B cell (primary cell): ENCODE measurements at regions of chr3 and their contacts with region 1.

Region 1: GRCh38 chr3:194671900-194672808 is at the start of gene LSG1:
- DNase-seq: peak; percentile 97
- ATAC-seq: peak; percentile 96
- H3K4me3 ChIP-seq: peak within 1 kb of the TSS; percentile 67 to 99 (median 85)
- H3K4me3 Mint-ChIP-seq: peak within 1 kb of the TSS; percentile 99
- H3K27ac ChIP-seq: peak within 1 kb of the TSS; percentile 92 to 96
- H3K27ac Mint-ChIP-seq: peak within 1 kb of the TSS; percentile 99
- H3K4me1 ChIP-seq: peaks cover 13 to 15% of the 10 kb centered on the region in 2 donors
- H3K4me1 Mint-ChIP-seq: peaks cover 25% of the 10 kb centered on the region
- H3K27me3 ChIP-seq: no peaks in the 10 kb centered on the region
- H3K27me3 Mint-ChIP-seq: peaks cover 7% of the 10 kb centered on the region
- CTCF ChIP-seq: no peak
- total RNA-seq, gene LSG1: 49.8 and 54.6 TPM in 2 replicates

Region 2: DNA sequence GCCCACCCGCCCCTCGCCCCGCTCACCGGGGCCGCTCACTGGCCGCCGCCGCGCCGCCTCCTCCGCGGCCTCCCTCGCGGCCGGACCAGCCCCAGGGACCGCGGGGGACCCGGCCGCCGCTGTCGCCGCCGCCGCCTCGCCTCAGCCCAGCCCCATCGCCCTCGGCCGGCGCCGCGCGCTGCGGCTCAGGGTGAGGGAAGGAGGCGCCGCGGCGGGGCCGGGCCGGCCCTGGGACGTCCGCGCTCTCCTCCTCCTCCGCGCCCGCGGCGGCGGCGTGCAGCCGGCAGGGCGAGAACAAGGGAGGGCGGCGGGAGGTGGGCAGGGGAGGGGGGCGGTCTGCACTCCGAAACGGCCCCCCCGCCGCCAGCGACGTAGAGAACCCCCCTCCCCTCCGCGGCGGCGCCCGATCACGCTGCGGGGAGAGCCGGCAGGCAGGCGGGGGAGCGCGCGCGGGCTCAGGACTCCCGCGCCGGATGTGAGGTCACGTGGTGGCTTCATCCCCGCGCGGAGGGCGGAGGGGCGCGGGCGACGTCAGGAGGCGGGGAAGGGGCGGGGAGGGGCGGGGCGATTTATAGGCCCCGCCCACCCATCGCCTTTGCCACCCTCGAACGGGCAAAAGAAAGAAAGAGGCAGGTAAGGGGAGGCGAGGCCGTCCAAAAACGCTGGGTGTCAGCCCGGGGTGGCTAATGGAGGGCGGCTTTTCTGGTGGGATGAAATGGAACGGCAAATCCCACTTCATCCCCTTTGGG is 185.4 kb before region 1 on chr3 and contains the start of gene ATP13A3:
- CTCF ChIA-PET with region 1: no interaction called
- POLR2A ChIA-PET with region 1: no interaction called
- intact Hi-C with region 1: loop called (anchors 5 kb)
- DNase-seq: peak; percentile 95
- ATAC-seq: peak; percentile 81
- H3K4me3 ChIP-seq: peak within 1 kb of the TSS; percentile 63 to 92 (median 77)
- H3K4me3 Mint-ChIP-seq: peak within 1 kb of the TSS; percentile 93
- H3K27ac ChIP-seq: peak within 1 kb of the TSS; percentile 66 to 71
- H3K27ac Mint-ChIP-seq: peak within 1 kb of the TSS; percentile 92
- H3K4me1 ChIP-seq: peaks cover 32 to 50% of the 10 kb centered on the region in 2 donors
- H3K4me1 Mint-ChIP-seq: peaks cover 55% of the 10 kb centered on the region
- H3K27me3 ChIP-seq: no peaks in the 10 kb centered on the region
- H3K27me3 Mint-ChIP-seq: no peaks in the 10 kb centered on the region
- CTCF ChIP-seq: peak; percentile 5
- total RNA-seq, gene ATP13A3: 61.0 and 61.1 TPM in 2 replicates

Region 3: DNA sequence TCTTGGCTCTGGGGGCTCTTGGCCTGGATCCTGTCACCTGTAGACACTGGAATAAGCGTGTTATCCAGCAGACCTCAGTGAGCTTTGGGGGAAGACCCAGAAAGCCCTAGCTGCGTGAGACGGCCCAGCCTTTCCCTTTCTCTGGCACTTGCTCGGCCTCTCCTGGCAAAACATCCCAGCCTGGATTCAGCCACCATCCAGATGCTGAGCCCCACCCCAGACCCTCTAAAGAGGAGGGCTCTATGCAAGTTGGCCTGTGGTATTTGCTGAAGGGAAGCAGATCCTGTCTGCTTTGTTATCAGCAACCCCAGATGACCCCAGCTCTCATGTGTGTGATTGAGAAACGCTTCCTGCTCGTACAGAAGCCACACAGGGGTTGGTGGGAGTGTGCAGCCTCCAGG is 280.7 kb after region 1 on chr3:
- CTCF ChIA-PET with region 1: interaction called, 20 read pairs
- POLR2A ChIA-PET with region 1: interaction called, 3 read pairs
- intact Hi-C with region 1: no loop called
- DNase-seq: no peak
- ATAC-seq: no peak
- H3K4me3 ChIP-seq: no peak overlapping the region
- H3K4me3 Mint-ChIP-seq: no peak overlapping the region
- H3K27ac ChIP-seq: no peak overlapping the region
- H3K27ac Mint-ChIP-seq: no peak overlapping the region
- H3K4me1 ChIP-seq: no peaks in the 10 kb centered on the region
- H3K4me1 Mint-ChIP-seq: no peaks in the 10 kb centered on the region
- H3K27me3 ChIP-seq: peaks cover 0 to 4% (median 0%) of the 10 kb centered on the region in 4 experiments
- H3K27me3 Mint-ChIP-seq: peaks cover 6% of the 10 kb centered on the region
- CTCF ChIP-seq: no peak

Region 4: DNA sequence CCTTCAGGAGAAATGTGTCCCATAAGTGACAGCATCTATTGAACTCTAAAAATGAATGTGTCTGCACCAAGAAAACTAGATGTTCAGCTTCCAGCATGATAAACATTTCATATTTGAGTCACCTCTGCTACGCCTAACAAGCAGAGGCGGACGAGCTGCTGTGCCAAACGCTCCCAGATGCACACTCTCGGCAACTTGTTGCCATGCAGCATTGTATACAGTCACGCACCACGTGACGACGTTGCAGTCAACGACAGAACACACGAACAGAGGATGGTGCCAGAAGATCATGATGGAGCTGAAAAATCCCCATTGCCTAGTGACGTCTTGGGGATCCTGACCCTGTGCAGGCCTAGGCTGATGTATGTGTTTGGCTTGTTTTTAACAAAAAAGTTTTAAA is 461.3 kb after region 1 on chr3:
- CTCF ChIA-PET with region 1: interaction called, 12 read pairs
- POLR2A ChIA-PET with region 1: interaction called, 3 read pairs
- intact Hi-C with region 1: no loop called
- DNase-seq: peak; percentile 66
- ATAC-seq: no peak
- H3K4me3 ChIP-seq: no peak overlapping the region
- H3K4me3 Mint-ChIP-seq: peak overlapping the region; percentile 37
- H3K27ac ChIP-seq: no peak overlapping the region
- H3K27ac Mint-ChIP-seq: peak overlapping the region; percentile 60
- H3K4me1 ChIP-seq: peaks cover 16 to 22% of the 10 kb centered on the region in 2 donors
- H3K4me1 Mint-ChIP-seq: peaks cover 37% of the 10 kb centered on the region
- H3K27me3 ChIP-seq: no peaks in the 10 kb centered on the region
- H3K27me3 Mint-ChIP-seq: no peaks in the 10 kb centered on the region
- CTCF ChIP-seq: no peak

Region 5: DNA sequence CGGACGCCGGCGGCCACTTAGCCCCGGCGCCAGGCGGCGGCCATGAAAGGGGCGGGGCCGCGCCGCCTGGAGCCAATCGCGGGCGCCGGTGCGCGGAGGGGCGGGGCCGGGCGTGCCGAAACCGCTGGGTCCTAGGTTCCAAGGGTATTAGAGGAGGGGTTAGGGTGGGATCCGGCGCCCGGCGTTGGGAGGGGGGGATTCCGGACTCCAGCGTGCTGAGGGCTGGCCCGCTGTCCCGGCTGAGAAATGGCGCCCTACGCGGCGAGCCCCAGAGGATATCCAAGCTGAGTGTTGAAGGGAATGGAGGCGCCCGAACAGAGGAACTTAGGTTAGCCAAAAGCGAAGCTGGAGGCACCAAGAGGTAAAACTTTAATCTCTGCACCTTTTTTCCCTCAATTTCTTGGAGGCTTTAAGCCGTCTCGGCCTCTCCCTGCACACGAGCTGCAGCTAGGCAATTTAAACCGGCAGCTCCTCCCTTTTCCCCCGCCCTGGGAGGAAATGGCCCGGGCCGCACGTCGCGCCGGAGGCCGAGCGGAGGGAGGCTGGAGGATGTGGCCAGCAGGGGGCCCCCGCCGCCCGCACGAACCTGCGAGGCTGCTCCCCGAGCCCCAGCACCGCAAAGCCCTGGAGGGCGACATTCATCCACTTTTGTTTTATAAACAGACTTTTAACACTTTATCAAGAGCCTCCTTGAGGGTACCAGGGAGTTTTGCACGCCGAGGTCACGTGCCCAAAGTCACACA is 599.1 kb after region 1 on chr3 and contains the start of gene XXYLT1:
- CTCF ChIA-PET with region 1: interaction called, 45 read pairs
- POLR2A ChIA-PET with region 1: interaction called, 7 read pairs
- intact Hi-C with region 1: loop called (anchors 1 kb)
- DNase-seq: peak; percentile 91
- ATAC-seq: peak; percentile 84
- H3K4me3 ChIP-seq: peak within 1 kb of the TSS; percentile 76 to 90 (median 84)
- H3K4me3 Mint-ChIP-seq: peak within 1 kb of the TSS; percentile 91
- H3K27ac ChIP-seq: peak within 1 kb of the TSS; percentile 27 to 52
- H3K27ac Mint-ChIP-seq: peak within 1 kb of the TSS; percentile 88
- H3K4me1 ChIP-seq: peaks cover 17 to 18% of the 10 kb centered on the region in 2 donors
- H3K4me1 Mint-ChIP-seq: peaks cover 19% of the 10 kb centered on the region
- H3K27me3 ChIP-seq: no peaks in the 10 kb centered on the region
- H3K27me3 Mint-ChIP-seq: no peaks in the 10 kb centered on the region
- CTCF ChIP-seq: peak; percentile 83
- total RNA-seq, gene XXYLT1: 8.8 and 11.2 TPM in 2 replicates

Region 6: GRCh38 chr3:195542698-195543499 is 870.7 kb after region 1 on chr3 and contains the start of gene PPP1R2:
- CTCF ChIA-PET with region 1: interaction called, 3 read pairs
- POLR2A ChIA-PET with region 1: no interaction called
- intact Hi-C with region 1: loop called (anchors 5 kb)
- DNase-seq: peak; percentile 95
- ATAC-seq: peak; percentile 90
- H3K4me3 ChIP-seq: peak within 1 kb of the TSS; percentile 75 to 95 (median 93)
- H3K4me3 Mint-ChIP-seq: peak within 1 kb of the TSS; percentile 97
- H3K27ac ChIP-seq: peak within 1 kb of the TSS; percentile 96 to 98
- H3K27ac Mint-ChIP-seq: peak within 1 kb of the TSS; percentile 96
- H3K4me1 ChIP-seq: peaks cover 58 to 65% of the 10 kb centered on the region in 2 donors
- H3K4me1 Mint-ChIP-seq: peaks cover 77% of the 10 kb centered on the region
- H3K27me3 ChIP-seq: no peaks in the 10 kb centered on the region
- H3K27me3 Mint-ChIP-seq: no peaks in the 10 kb centered on the region
- CTCF ChIP-seq: no peak
- total RNA-seq, gene PPP1R2: 73.8 and 81.8 TPM in 2 replicates